ENCODE measurements at regions of chr9 and their contacts with region 1.

Region 1: DNA sequence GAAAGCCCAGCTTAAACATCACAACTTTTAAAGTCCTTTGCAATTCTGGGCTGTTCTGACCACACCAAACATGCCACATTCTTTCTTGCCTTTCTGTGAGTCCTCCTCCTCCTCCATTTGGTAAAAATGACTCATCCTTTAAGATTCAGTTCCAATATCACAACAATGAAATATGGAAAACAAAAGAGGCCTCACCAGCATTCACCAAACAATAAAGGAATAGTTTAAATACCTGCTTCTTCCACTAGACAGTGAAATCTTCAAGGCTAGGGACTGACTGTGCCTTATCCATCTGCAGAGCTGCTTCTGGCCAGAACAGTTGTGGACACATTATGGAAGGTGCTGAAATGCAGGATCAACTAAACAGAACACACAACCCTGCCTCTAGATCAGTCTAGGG is 36.0 kb downstream of the NR6A1 start:
- DNase-seq: no peak
- H3K4me3 Mint-ChIP-seq: no peak overlapping the region
- H3K27ac Mint-ChIP-seq: peak overlapping the region; percentile 73
- H3K4me1 Mint-ChIP-seq: peaks cover 21% of the 10 kb centered on the region
- H3K27me3 Mint-ChIP-seq: peaks cover 3% of the 10 kb centered on the region

Region 2: DNA sequence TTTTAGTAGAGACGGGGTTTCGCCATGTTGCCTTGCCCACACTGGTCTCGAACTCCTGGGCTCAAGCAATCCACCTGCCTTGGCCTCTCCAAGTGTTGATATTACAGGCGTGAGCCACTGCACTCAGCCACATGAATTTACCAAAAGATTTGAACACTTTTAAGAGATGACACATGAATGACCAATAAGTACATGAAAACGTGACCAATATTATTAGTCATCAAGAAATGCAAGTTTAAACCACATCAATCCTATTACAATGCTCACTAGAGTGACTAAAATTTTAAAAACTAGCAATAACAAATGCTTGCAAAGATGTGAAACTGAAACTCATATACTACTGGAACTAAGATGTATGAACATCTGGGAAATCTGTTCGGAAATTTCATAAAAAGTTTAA is 18.3 kb before region 1 on chr9:
- intact Hi-C with region 1: loop called (anchors 2 kb)
- DNase-seq: no peak
- H3K4me3 Mint-ChIP-seq: no peak overlapping the region
- H3K27ac Mint-ChIP-seq: no peak overlapping the region
- H3K4me1 Mint-ChIP-seq: peaks cover 6% of the 10 kb centered on the region
- H3K27me3 Mint-ChIP-seq: peaks cover 8% of the 10 kb centered on the region

Measured in activated CD4-positive, alpha-beta T cell treated with anti-CD3 and anti-CD28 coated beads, Interleukin-2, amount 10 ng/mL, durations not matched to agents 24 days and 14 days (primary cell).